Right cardiac atrium (tissue), 5 donors: ENCODE measurements at regions of chr10 and their contacts with region 1.

Region 1: GRCh38 chr10:21533467-21534279 is at the start of gene MLLT10:
- DNase-seq: peak; percentile 97 to 99 (median 98)
- ATAC-seq: peak; percentile 96 to 97
- H3K4me3 ChIP-seq: peak within 1 kb of the TSS; percentile 95
- H3K27ac ChIP-seq: peak within 1 kb of the TSS; percentile 99
- H3K4me1 ChIP-seq: no peaks in the 10 kb centered on the region
- H3K27me3 ChIP-seq: no peaks in the 10 kb centered on the region
- total RNA-seq, gene MLLT10: 26.6 to 36.1 (median 29.8) TPM

Region 2: DNA sequence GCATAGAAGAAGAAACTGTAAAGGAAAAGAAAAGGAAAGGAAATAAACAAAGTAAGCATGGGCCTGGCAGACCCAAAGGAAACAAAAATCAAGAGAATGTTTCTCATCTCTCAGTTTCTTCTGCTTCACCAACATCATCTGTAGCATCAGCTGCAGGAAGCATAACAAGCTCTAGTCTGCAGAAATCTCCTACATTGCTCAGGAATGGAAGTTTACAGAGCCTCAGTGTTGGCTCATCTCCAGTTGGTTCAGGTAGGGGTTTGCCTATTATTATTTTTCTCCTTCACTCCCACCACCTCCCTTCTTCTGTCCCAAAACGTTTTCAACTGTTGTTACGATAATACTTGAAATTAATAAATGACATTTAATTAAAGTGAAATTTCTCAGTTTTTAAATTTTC is 140.0 kb after region 1 on chr10:
- intact Hi-C with region 1: loop called in 1 of 4 experiments (anchors 5 kb)
- DNase-seq: no peak
- ATAC-seq: no peak
- H3K4me3 ChIP-seq: no peak overlapping the region
- H3K27ac ChIP-seq: no peak overlapping the region
- H3K4me1 ChIP-seq: peaks cover 1% of the 10 kb centered on the region
- H3K27me3 ChIP-seq: no peaks in the 10 kb centered on the region